K562 (cell line): ENCODE measurements at regions of chrX and their contacts with region 1.

Region 1: GRCh38 chrX:100512471-100512870 is 72.3 kb upstream of the TNMD start:
- DNase-seq: peak; percentile 2 to 16 (median 10)
- ATAC-seq: no peak
- H3K4me3 ChIP-seq: no peak overlapping the region
- H3K27ac ChIP-seq: no peak overlapping the region
- H3K4me1 ChIP-seq: no peaks in the 10 kb centered on the region
- H3K27me3 ChIP-seq: no peaks in the 10 kb centered on the region
- CTCF ChIP-seq: peak in 2 of 3 experiments; percentile 11 to 49; a peak in 3 of 6 replicates
- EP300 ChIP-seq: no peak
- POLR2A ChIP-seq: no peak
- RAD21 ChIP-seq: peak in 1 of 2 experiments; percentile 31; a peak in 1 of 4 replicates

Region 2: GRCh38 chrX:100674705-100675104 is 162.2 kb after region 1 on chrX:
- CTCF ChIA-PET with region 1: no interaction called
- POLR2A ChIA-PET with region 1: no interaction called
- in situ Hi-C with region 1: no loop called
- intact Hi-C with region 1: loop called (anchors 10 kb)
- DNase-seq: peak in 2 of 4 experiments; percentile 11 to 16
- ATAC-seq: no peak
- H3K4me3 ChIP-seq: no peak overlapping the region
- H3K27ac ChIP-seq: no peak overlapping the region
- H3K4me1 ChIP-seq: no peaks in the 10 kb centered on the region
- H3K27me3 ChIP-seq: no peaks in the 10 kb centered on the region
- CTCF ChIP-seq: no peak
- EP300 ChIP-seq: no peak
- POLR2A ChIP-seq: no peak
- RAD21 ChIP-seq: no peak

Region 3: DNA sequence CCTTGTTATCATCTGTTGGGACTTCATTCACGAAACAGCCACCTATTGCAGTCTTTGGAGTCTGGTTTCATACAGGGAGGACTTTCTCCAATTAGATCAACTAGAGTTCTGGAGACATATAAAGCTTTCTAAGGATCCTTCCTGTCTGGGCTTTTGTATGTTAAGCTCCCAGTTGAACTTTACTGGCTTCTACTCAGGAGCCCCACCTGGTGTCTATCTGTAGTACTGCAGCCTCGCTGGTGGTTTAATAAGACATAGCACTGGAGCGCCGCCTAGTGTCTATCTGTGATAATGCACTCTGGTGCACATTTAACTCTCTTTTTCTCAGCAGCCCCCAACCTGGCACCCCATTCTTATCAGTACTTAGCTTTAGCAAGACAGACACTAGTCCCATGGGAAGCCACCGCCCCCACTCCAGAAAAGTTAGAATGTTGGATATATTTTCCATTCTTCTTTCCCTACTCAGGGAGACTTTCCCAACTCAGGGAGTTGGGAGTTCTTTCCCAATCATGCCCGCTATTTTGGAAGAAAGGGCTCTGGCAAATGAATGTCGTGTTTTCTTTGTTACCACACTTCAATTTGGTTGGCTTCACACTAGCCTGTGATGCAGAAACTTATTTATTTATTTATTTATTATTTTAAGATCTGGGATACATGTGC is 256.3 kb after region 1 on chrX:
- CTCF ChIA-PET with region 1: interaction called, 6 read pairs
- POLR2A ChIA-PET with region 1: no interaction called
- in situ Hi-C with region 1: no loop called
- intact Hi-C with region 1: loop called (anchors 2 kb)
- DNase-seq: peak; percentile 71 to 80 (median 77)
- ATAC-seq: peak; percentile 74
- H3K4me3 ChIP-seq: no peak overlapping the region
- H3K27ac ChIP-seq: no peak overlapping the region
- H3K4me1 ChIP-seq: no peaks in the 10 kb centered on the region
- H3K27me3 ChIP-seq: no peaks in the 10 kb centered on the region
- CTCF ChIP-seq: peak; percentile 96 to 100 (median 100)
- EP300 ChIP-seq: no peak
- POLR2A ChIP-seq: no peak
- RAD21 ChIP-seq: peak; percentile 94 to 98

Region 4: GRCh38 chrX:101241531-101241930 is 729.1 kb after region 1 on chrX:
- CTCF ChIA-PET with region 1: no interaction called
- POLR2A ChIA-PET with region 1: no interaction called
- in situ Hi-C with region 1: no loop called
- intact Hi-C with region 1: no loop called
- DNase-seq: no peak
- ATAC-seq: no peak
- H3K4me3 ChIP-seq: no peak overlapping the region
- H3K27ac ChIP-seq: no peak overlapping the region
- H3K4me1 ChIP-seq: no peaks in the 10 kb centered on the region
- H3K27me3 ChIP-seq: peaks cover 0 to 6% of the 10 kb centered on the region in 2 experiments; a peak in 1 of 5 replicates
- CTCF ChIP-seq: no peak
- EP300 ChIP-seq: no peak
- POLR2A ChIP-seq: no peak
- RAD21 ChIP-seq: no peak